ENCODE measurements at regions of chr3 and their contacts with region 1.

Region 1: GRCh38 chr3:187616307-187616972 is 53.8 kb downstream of the SST start:
- DNase-seq: no peak
- ATAC-seq: peak; percentile 89
- H3K4me3 ChIP-seq: no peak overlapping the region
- H3K27ac ChIP-seq: no peak overlapping the region
- H3K4me1 ChIP-seq: no peaks in the 10 kb centered on the region
- H3K27me3 ChIP-seq: no peaks in the 10 kb centered on the region; a peak in 1 of 4 replicates
- CTCF ChIP-seq: peak; percentile 66 to 69 (median 66)
- EP300 ChIP-seq: no peak
- POLR2A ChIP-seq: no peak
- RAD21 ChIP-seq: peak; percentile 70

Region 2: GRCh38 chr3:187640569-187641059 is 24.2 kb after region 1 on chr3:
- CTCF ChIA-PET with region 1: interaction called, 10 read pairs
- POLR2A ChIA-PET with region 1: no interaction called
- RAD21 ChIA-PET with region 1: no interaction called
- SMC1A ChIA-PET with region 1: interaction called, 4 read pairs
- in situ Hi-C with region 1: no loop called
- intact Hi-C with region 1: no loop called
- DNase-seq: no peak
- ATAC-seq: no peak
- H3K4me3 ChIP-seq: no peak overlapping the region
- H3K27ac ChIP-seq: no peak overlapping the region
- H3K4me1 ChIP-seq: no peaks in the 10 kb centered on the region
- H3K27me3 ChIP-seq: no peaks in the 10 kb centered on the region; a peak in 2 of 4 replicates
- CTCF ChIP-seq: no peak
- EP300 ChIP-seq: no peak
- POLR2A ChIP-seq: no peak
- RAD21 ChIP-seq: no peak

Region 3: DNA sequence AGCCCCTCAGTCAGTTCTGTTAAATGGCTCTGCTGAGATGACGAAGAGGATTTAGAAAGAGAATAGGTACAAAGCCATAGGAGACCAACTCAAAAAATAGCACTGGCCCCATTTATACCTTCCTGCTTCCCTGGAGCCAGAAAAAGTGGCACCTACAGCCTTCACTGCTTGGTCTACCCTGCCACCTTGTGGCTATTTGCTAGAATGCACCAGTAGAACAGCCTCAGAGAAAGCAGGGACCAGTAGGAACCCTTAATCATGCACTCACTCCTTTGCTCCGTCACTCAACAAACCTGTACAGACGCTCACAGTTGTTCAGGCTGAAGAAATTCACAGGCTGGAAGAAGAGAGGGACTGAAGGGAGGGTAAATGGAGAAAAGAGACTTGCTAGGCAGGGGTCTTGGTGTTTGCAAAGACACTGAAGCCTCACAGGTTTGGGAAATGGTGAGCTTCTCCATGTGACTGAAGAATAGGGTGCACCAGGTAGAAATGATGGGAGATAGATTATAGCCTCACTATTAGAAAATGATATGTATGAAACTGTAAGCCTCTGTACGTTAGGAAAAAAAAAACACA is 98.1 kb after region 1 on chr3:
- CTCF ChIA-PET with region 1: interaction called, 15 read pairs
- POLR2A ChIA-PET with region 1: no interaction called
- RAD21 ChIA-PET with region 1: interaction called, 3 read pairs
- SMC1A ChIA-PET with region 1: interaction called, 3 read pairs
- in situ Hi-C with region 1: no loop called
- intact Hi-C with region 1: no loop called
- DNase-seq: no peak
- ATAC-seq: peak; percentile 96
- H3K4me3 ChIP-seq: no peak overlapping the region
- H3K27ac ChIP-seq: no peak overlapping the region
- H3K4me1 ChIP-seq: no peaks in the 10 kb centered on the region
- H3K27me3 ChIP-seq: no peaks in the 10 kb centered on the region
- CTCF ChIP-seq: peak; percentile 87 to 92 (median 90); a peak in 5 of 6 replicates
- EP300 ChIP-seq: no peak
- POLR2A ChIP-seq: no peak
- RAD21 ChIP-seq: peak; percentile 96